ENCODE measurements at regions of chr5 and their contacts with region 1.

Region 1: DNA sequence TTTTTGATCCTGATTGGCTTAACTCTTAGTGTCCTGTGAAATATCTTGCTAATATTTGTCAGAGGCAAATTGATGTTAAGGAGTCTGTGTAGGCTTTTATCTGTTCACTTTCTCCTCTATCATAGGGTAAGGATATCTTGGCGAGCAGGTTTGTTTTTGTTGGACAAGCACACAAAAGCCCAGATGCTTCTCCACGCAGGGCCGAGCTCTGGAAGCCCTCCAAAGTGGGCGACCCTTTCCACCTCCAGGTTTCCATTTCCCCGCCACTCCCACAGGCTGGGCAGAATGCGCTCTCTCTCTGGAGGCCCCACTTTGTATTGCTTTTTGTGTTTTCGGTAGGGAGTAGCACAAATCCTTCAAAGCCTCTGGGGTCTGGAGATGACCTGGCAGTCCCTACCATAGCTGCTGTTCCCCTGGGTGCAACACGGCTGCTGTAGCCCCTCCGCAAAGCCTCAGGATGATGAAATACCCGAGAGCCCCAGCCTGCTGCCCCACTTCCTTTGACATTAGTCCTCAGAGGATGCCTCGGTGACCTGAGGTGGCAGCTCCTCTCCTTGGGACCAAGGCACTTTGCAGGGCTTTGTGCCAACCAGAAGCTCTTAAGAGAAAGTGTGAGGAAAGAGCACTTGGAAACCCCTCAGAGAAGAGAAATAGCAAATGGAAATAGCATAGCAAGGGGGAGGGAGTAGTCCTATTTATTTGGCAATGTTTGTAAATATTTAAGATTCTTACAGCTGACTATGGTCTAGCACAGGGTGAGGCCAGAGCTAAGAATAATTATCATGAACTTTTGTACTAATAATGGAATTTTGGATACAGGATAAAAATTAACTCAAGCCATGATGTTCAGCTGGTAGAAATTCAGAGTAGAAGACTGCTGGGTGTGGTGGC is 122.8 kb downstream of the ARHGEF28 start:
- DNase-seq: peak; percentile 89
- H3K4me3 ChIP-seq: peak overlapping the region in 1 of 3 experiments; percentile 42
- H3K27ac ChIP-seq: peak overlapping the region; percentile 48
- H3K4me1 ChIP-seq: peaks cover 68% of the 10 kb centered on the region
- H3K27me3 ChIP-seq: no peaks in the 10 kb centered on the region
- CTCF ChIP-seq: no peak
- POLR2A ChIP-seq: no peak

Region 2: GRCh38 chr5:73045623-73046022 is 703.1 kb before region 1 on chr5:
- CTCF ChIA-PET with region 1: no interaction called
- POLR2A ChIA-PET with region 1: no interaction called
- dilution Hi-C with region 1: no loop called
- intact Hi-C with region 1: no loop called
- DNase-seq: no peak
- H3K4me3 ChIP-seq: no peak overlapping the region
- H3K27ac ChIP-seq: no peak overlapping the region
- H3K4me1 ChIP-seq: no peaks in the 10 kb centered on the region
- H3K27me3 ChIP-seq: no peaks in the 10 kb centered on the region
- CTCF ChIP-seq: no peak
- POLR2A ChIP-seq: no peak

Region 3: DNA sequence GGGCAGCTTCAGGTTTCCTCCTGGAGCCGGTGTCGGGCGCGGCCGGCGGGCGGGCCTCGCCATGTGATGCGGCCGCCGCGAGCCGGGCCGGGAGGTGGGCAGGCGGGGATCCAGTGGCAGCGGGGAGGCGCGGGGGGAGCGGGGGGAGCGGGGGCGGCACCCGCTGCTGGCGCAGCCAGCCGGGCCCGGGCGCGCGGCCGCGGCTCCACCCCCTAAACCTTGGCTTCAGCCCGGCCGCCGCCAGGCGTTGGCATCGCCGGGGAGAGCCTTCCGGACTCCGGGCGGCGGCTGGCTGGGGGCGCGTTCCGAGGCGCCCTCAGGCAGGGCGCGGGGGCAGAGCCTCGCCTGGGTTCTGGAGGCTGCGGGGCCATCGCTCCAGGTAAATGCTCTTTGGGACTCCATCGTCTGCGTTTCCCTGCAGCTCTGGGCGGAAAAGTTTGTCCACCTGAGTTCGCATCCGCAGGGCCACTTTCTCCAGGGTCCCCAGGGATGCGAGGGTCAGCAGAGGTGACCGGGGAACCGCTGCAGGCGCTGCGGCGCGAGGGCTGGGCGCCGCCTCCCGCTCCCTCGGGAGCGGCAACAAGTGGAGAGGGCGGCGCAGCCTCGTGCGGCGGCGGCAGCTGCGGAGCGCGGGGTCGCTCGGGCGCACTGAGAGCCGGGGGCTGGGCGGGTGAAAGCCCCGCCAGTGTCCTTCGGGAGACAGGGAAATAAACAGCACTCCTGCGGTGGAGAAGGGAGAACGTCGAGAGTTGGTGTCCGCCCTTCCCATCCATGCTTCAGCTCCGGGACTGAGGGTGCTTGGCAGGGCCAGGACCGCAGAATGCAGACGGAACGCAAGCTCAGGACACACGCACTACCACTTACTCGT is 122.6 kb before region 1 on chr5 and contains the start of gene ARHGEF28:
- CTCF ChIA-PET with region 1: no interaction called
- POLR2A ChIA-PET with region 1: no interaction called
- dilution Hi-C with region 1: no loop called
- intact Hi-C with region 1: loop called (anchors 5 kb)
- DNase-seq: peak; percentile 47
- H3K4me3 ChIP-seq: peak within 1 kb of the TSS; percentile 48 to 83 (median 74)
- H3K27ac ChIP-seq: peak within 1 kb of the TSS; percentile 81
- H3K4me1 ChIP-seq: peaks cover 40% of the 10 kb centered on the region
- H3K27me3 ChIP-seq: no peaks in the 10 kb centered on the region
- CTCF ChIP-seq: no peak
- POLR2A ChIP-seq: peak; percentile 92
- total RNA-seq, gene ARHGEF28: 108 and 116 TPM in 2 replicates

Region 4: DNA sequence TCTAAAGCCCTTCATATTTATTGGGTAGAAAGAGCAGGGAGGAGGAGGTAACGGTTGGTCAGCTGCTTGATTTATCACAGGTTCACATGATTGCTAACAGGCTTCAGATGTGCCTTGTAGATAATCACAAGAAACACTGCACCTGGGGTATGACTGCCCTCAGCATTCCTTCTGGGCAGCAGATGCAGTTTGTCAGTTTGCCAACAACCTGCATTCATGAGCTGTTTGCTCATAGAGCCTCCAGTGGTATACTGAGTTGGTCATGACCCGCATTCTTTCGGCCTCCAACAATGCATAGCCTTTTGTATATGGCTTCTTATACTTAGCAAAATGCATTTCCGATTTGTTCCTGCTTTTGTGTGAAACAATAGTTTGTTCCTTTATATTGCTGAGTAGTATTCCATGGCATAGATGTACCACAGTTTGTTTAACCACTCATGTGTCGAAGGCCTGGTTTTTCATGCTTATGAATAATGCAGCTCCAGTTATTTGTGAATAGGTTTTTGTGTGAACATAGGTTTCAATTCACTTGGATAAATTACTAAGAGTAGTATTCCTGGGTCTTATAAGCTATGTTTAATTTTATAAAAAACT is 39.1 kb before region 1 on chr5:
- CTCF ChIA-PET with region 1: interaction called, 5 read pairs
- POLR2A ChIA-PET with region 1: no interaction called
- dilution Hi-C with region 1: no loop called
- intact Hi-C with region 1: loop called (anchors 2 kb)
- DNase-seq: peak; percentile 46
- H3K4me3 ChIP-seq: no peak overlapping the region
- H3K27ac ChIP-seq: no peak overlapping the region
- H3K4me1 ChIP-seq: peaks cover 10% of the 10 kb centered on the region
- H3K27me3 ChIP-seq: no peaks in the 10 kb centered on the region
- CTCF ChIP-seq: no peak
- POLR2A ChIP-seq: no peak

Region 5: DNA sequence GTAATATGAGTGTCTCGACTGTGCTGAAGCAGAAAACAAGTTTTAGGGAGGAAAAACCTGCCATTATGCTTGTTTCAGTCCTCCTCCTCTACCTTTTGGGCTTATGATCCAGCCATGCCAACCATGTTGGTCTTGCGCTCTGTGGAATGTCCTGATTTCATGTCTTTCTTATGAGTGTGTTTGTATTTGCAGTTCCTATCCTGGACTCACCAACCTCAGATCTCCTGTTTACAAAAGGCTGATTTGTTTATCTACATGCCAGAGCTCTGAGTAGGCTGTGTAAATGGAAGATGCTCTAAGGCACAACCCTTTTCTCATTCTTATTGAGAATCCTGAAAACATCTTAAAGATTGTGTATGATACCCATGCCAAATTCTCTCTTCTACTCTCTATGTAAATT is 15.8 kb after region 1 on chr5:
- CTCF ChIA-PET with region 1: interaction called, 17 read pairs
- POLR2A ChIA-PET with region 1: no interaction called
- dilution Hi-C with region 1: no loop called
- intact Hi-C with region 1: loop called (anchors 1 kb)
- DNase-seq: peak; percentile 43
- H3K4me3 ChIP-seq: no peak overlapping the region
- H3K27ac ChIP-seq: peak overlapping the region; percentile 55
- H3K4me1 ChIP-seq: peaks cover 44% of the 10 kb centered on the region
- H3K27me3 ChIP-seq: no peaks in the 10 kb centered on the region
- CTCF ChIP-seq: no peak
- POLR2A ChIP-seq: peak; percentile 28

Region 6: GRCh38 chr5:73774924-73775323 is 26.2 kb after region 1 on chr5:
- CTCF ChIA-PET with region 1: interaction called, 6 read pairs
- POLR2A ChIA-PET with region 1: interaction called, 6 read pairs
- dilution Hi-C with region 1: no loop called
- intact Hi-C with region 1: loop called (anchors 2 kb)
- DNase-seq: peak; percentile 87
- H3K4me3 ChIP-seq: no peak overlapping the region
- H3K27ac ChIP-seq: no peak overlapping the region
- H3K4me1 ChIP-seq: peaks cover 19% of the 10 kb centered on the region
- H3K27me3 ChIP-seq: no peaks in the 10 kb centered on the region
- CTCF ChIP-seq: no peak
- POLR2A ChIP-seq: peak; percentile 76

Measured in endothelial cell of umbilical vein (primary cell).